ENCODE measurements at regions of chr2 and their contacts with region 1.

Region 1: DNA sequence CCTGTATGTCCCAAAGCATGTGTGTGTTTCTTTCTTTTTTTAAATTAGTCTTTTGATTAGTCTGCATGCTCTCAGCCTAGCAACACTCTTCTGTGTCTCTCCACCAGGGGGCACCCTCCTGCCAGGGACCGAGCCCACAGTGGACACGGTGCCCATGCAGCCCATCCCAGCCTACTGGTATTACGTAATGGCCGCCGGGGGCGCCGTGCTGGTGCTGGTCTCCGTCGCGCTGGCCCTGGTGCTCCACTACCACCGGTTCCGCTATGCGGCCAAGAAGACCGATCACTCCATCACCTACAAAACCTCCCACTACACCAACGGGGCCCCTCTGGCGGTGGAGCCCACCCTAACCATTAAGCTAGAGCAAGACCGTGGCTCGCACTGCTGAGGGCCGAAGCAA is 93.8 kb downstream of the NRP2 start:
- DNase-seq: peak; percentile 72 to 80 (median 79)
- ATAC-seq: peak; percentile 94 to 97 (median 95)
- H3K4me3 ChIP-seq: no peak overlapping the region
- H3K27ac ChIP-seq: no peak overlapping the region
- H3K4me1 ChIP-seq: peaks cover 0 to 9% (median 0%) of the 10 kb centered on the region in 4 donors
- H3K27me3 ChIP-seq: no peaks in the 10 kb centered on the region
- CTCF ChIP-seq: peak; percentile 74 to 88 (median 82)
- POLR2A ChIP-seq: no peak

Region 2: DNA sequence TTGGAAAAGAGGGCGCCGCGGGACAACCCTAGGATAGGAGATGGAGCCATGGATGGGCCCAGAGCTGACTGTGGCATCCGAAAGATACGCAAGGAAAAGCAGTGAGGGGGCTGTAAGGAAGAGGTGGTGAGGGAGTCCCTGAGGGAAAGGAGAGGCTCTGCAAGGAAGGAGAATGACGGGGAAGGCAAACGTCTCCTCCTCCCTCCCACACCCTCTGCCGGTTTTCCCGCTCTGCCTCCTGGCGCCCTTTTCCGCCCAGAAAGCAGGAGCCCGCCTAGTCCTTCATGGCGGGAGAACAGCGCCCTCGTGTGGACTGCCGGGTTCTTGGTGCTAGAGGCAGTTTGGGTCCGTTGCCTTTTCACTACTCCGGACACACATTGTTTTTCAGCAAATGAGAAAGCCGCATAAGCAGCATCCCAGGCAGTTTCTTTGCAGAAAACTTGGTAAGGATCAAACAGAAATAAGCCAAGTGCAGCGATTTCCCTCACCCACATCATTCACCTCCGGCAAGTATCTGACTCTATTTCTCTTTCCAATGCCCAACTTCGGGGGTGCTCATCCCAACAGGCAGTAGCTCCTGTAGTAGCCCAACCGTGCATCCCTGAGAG is 109.5 kb after region 1 on chr2:
- intact Hi-C with region 1: loop called (anchors 5 kb)
- DNase-seq: peak; percentile 87 to 89 (median 88)
- ATAC-seq: peak; percentile 97 to 99 (median 98)
- H3K4me3 ChIP-seq: no peak overlapping the region
- H3K27ac ChIP-seq: no peak overlapping the region
- H3K4me1 ChIP-seq: no peaks in the 10 kb centered on the region
- H3K27me3 ChIP-seq: no peaks in the 10 kb centered on the region
- CTCF ChIP-seq: peak; percentile 91 to 96 (median 94)
- POLR2A ChIP-seq: no peak